Dendritic cell treated with granulocyte-macrophage colony-stimulating factor and Interleukin-4, amounts not matched to agents 40 ng/mL and 50 ng/mL, for 4 days (primary cell): ENCODE measurements at regions of chr9 and their contacts with region 1.

Region 1: GRCh38 chr9:4792572-4793458 is at the start of gene RCL1:
- H3K4me3 Mint-ChIP-seq: peak within 1 kb of the TSS; percentile 90
- H3K27ac Mint-ChIP-seq: peak within 1 kb of the TSS; percentile 87
- H3K4me1 Mint-ChIP-seq: peaks cover 40% of the 10 kb centered on the region
- H3K27me3 Mint-ChIP-seq: peaks cover 21% of the 10 kb centered on the region

Region 2: GRCh38 chr9:4740638-4741364 is 52.0 kb before region 1 on chr9 and contains the start of gene AK3:
- intact Hi-C with region 1: loop called (anchors 2 kb)
- H3K4me3 Mint-ChIP-seq: peak within 1 kb of the TSS; percentile 87
- H3K27ac Mint-ChIP-seq: peak within 1 kb of the TSS; percentile 86
- H3K4me1 Mint-ChIP-seq: peaks cover 25% of the 10 kb centered on the region
- H3K27me3 Mint-ChIP-seq: no peaks in the 10 kb centered on the region

Region 3: DNA sequence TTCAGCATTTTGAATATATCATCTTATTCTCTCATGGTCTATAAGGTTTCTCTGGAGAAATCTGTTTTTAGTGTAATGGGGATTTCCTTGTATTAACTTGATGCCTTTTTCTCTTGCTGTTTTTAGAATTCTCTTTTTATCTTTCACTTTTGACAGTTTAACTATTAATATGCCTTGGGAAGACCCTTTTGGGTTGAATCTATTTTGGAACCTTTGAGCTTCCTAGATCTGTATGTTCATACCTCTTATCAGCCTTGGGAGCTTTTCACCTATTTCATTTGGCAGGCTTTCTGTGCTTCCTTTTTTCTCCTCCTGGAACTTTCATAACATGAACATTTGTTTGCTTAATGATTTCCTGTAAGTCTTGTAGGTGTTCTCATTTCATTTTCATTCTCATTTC is 22.1 kb after region 1 on chr9:
- intact Hi-C with region 1: no loop called
- H3K4me3 Mint-ChIP-seq: no peak overlapping the region
- H3K27ac Mint-ChIP-seq: no peak overlapping the region
- H3K4me1 Mint-ChIP-seq: peaks cover 29% of the 10 kb centered on the region
- H3K27me3 Mint-ChIP-seq: no peaks in the 10 kb centered on the region

Region 4: DNA sequence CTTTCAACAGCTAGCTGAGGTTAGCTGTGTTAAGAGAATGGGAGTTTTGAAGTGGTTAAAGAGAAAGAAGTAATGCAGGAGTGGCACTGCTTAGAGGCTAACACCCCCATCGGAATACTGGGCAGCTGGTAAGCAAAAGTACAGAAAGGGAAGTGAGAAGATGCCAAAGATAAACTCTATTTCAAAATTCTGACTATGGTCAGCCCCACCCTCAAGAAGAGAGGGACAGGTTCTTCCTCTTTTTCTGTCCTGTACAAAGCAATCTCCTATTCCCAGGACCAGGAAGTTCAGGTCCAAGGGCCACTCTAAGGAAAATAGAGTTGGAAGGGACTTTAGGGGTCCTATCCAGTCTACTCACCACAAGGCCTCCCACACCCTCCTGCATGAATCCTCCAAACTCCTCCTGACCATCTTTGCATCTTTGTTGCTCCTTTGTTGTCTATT is 146.3 kb after region 1 on chr9:
- intact Hi-C with region 1: loop called (anchors 5 kb)
- H3K4me3 Mint-ChIP-seq: peak overlapping the region; percentile 31
- H3K27ac Mint-ChIP-seq: peak overlapping the region; percentile 72
- H3K4me1 Mint-ChIP-seq: peaks cover 52% of the 10 kb centered on the region
- H3K27me3 Mint-ChIP-seq: no peaks in the 10 kb centered on the region

Region 5: GRCh38 chr9:5002811-5003210 is 210.0 kb after region 1 on chr9:
- intact Hi-C with region 1: loop called (anchors 5 kb)
- H3K4me3 Mint-ChIP-seq: no peak overlapping the region
- H3K27ac Mint-ChIP-seq: no peak overlapping the region
- H3K4me1 Mint-ChIP-seq: peaks cover 8% of the 10 kb centered on the region
- H3K27me3 Mint-ChIP-seq: no peaks in the 10 kb centered on the region